Activated T-helper 1 cell treated with anti-CD3 and anti-CD28 coated beads, Interleukin-12 subunit alpha, Interleukin-12 subunit beta, Interleukin-2, Interleukin-4 antibody, amounts not matched to agents 30 ng/mL and 10 ng/mL and 1 ng/mL, durations not matched to agents 14 hours and 24 hours and 36 hours (primary cell): ENCODE measurements at regions of chr18 and their contacts with region 1.

Region 1: GRCh38 chr18:2641638-2642037 is 13.9 kb upstream of the SMCHD1 start:
- DNase-seq: no peak
- H3K4me3 Mint-ChIP-seq: peak overlapping the region; percentile 73
- H3K27ac Mint-ChIP-seq: peak overlapping the region; percentile 94
- H3K4me1 Mint-ChIP-seq: peaks cover 53% of the 10 kb centered on the region
- H3K27me3 Mint-ChIP-seq: peaks cover 2% of the 10 kb centered on the region

Region 2: DNA sequence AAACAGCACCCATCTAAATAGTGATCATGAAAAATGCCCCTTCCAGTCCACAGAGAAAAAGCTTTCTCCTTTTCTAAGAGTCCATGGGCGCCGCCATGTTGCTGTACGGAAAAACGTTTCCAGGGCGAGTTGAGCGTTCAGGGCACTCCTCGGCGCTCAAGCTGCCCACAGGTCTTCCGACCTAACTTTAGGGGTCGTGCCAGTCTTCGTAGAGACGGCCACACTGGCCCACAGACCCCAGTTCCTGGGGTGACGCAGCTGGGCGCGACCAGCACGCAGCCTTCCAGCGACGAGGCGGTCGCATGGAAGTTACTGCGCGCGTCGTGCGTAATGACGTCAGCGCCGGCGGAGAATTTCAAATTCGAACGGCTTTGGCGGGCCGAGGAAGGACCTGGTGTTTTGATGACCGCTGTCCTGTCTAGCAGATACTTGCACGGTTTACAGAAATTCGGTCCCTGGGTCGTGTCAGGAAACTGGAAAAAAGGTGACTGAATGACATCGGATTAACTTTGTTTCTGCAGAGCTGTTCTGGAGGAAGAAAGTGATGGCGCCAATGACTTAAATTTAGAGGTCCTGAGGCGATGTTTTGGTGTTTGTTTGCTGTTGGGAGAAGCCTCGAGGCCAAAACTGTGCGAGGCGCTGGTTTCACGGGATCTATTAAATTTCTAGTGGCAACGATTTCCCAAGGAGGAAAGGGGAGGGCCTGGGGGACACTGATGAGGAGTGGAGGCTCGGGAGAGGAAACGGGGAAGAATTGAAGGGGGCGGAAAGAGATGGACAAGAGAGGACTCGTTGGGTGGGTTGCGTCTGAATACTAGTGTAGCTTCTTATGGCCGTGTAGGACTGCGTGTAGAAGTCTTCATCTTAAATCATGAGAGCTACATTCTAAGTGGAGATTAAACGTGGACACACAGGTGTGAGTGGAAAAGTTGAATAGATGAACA is 70.2 kb before region 1 on chr18 and contains the starts of genes METTL4 and NDC80:
- intact Hi-C with region 1: loop called (anchors 1 kb)
- DNase-seq: peak; percentile 79
- H3K4me3 Mint-ChIP-seq: peak within 1 kb of the TSS; percentile 97
- H3K27ac Mint-ChIP-seq: peak within 1 kb of the TSS; percentile 97
- H3K4me1 Mint-ChIP-seq: peaks cover 66% of the 10 kb centered on the region
- H3K27me3 Mint-ChIP-seq: no peaks in the 10 kb centered on the region
- total RNA-seq, gene METTL4: 15.0 and 26.2 TPM in 2 replicates
- total RNA-seq, gene NDC80: 41.2 and 42.6 TPM in 2 replicates

Region 3: DNA sequence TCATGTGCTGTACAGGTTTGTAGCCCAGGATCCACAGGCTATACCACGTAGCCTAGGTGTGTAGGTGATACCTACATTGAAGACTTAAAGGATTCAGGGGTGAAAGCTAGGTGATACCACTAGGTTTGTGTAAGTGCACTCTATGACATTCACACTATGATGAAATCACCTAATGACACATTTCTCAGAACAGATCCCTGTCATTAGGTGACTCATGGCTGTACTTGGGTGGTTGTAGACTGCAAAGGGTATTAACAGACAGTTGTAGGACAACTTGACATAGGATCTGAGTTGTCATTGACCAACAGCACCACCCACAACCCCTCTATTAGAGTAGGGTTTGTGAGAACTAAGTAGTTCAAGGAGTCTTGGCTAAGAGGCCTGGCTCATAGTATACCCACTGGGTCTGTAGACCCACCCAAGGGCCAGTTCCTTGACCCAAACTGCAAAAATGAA is 13.8 kb before region 1 on chr18:
- intact Hi-C with region 1: loop called (anchors 1 kb)
- DNase-seq: no peak
- H3K4me3 Mint-ChIP-seq: no peak overlapping the region
- H3K27ac Mint-ChIP-seq: peak overlapping the region; percentile 29
- H3K4me1 Mint-ChIP-seq: peaks cover 18% of the 10 kb centered on the region
- H3K27me3 Mint-ChIP-seq: no peaks in the 10 kb centered on the region

Region 4: DNA sequence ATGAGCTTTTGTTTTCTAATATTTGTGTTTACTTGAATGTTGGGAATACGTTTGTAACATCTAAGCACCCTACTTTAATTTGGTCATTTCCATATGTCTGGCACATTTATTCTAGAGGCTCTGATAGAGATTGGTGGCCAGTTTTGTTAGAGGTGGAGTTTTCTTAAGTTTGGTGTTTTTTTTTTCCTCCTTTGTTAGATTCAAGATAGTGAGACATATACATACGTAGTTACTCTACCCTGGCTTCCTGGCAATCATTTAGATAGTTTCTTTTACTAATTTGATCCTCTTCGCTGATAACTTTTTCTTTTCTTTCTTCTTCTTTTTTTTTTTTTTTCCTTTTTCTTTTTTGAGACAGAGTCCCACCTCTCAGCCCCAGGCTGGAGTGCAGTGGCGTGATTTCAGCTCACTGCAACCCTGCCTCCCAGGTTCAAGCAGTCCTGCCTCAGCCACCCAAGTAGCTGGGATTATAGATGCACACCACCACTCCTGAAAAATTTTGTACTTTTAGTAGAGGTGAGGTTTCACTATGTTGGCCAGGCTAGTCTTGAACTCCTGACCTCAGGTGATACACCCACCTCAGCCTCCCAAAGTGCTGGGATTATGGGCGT is 40.5 kb after region 1 on chr18:
- intact Hi-C with region 1: loop called (anchors 1 kb)
- DNase-seq: no peak
- H3K4me3 Mint-ChIP-seq: no peak overlapping the region
- H3K27ac Mint-ChIP-seq: peak overlapping the region; percentile 72
- H3K4me1 Mint-ChIP-seq: peaks cover 61% of the 10 kb centered on the region
- H3K27me3 Mint-ChIP-seq: no peaks in the 10 kb centered on the region

Region 5: GRCh38 chr18:3261371-3262246 is 620.0 kb after region 1 on chr18 and contains the start of gene MYL12B:
- intact Hi-C with region 1: loop called (anchors 5 kb)
- DNase-seq: peak; percentile 75
- H3K4me3 Mint-ChIP-seq: peak within 1 kb of the TSS; percentile 93
- H3K27ac Mint-ChIP-seq: peak within 1 kb of the TSS; percentile 98
- H3K4me1 Mint-ChIP-seq: peaks cover 82% of the 10 kb centered on the region
- H3K27me3 Mint-ChIP-seq: no peaks in the 10 kb centered on the region
- total RNA-seq, gene MYL12B: 234 and 235 TPM in 2 replicates